A549 (cell line): ENCODE measurements at regions of chr21 and their contacts with region 1.

Region 1: GRCh38 chr21:34888569-34889319 is 160.4 kb downstream of the RUNX1 start:
- DNase-seq: peak; percentile 83 to 89
- ATAC-seq: peak; percentile 72 to 79
- H3K4me3 ChIP-seq: peak overlapping the region; percentile 72
- H3K27ac ChIP-seq: peak overlapping the region; percentile 98 to 100
- H3K4me1 ChIP-seq: peaks cover 16% of the 10 kb centered on the region
- CTCF ChIP-seq: no peak
- EP300 ChIP-seq: no peak
- POLR2A ChIP-seq: peak; percentile 89
- RAD21 ChIP-seq: no peak

Region 2: DNA sequence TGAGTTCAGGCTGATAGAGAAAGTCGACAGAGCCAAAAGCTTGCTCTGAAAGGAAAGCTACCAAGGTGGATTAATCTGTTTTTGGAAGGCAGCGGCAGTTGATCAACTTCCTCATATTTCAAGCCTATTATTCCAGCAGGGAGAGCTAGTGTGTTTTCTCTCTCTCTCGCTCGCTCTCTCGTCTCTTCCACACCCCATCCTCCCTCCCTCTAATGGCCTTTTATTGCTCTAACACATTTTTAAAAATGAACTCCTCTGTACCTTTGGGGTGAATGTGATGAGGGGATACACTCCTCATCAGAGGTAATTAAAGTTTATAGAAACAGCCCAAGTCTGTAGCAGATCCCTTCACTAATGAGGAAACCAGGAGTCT is 93.6 kb before region 1 on chr21:
- CTCF ChIA-PET with region 1: interaction called, 7 read pairs
- POLR2A ChIA-PET with region 1: interaction called, 14 read pairs
- DNase-seq: peak; percentile 26 to 61
- ATAC-seq: peak; percentile 74 to 80
- H3K4me3 ChIP-seq: no peak overlapping the region
- H3K27ac ChIP-seq: peak overlapping the region; percentile 77 to 85
- H3K4me1 ChIP-seq: peaks cover 74% of the 10 kb centered on the region
- CTCF ChIP-seq: peak; percentile 26; the same call in 2 of the 3 replicates
- EP300 ChIP-seq: no peak
- POLR2A ChIP-seq: no peak
- RAD21 ChIP-seq: peak; percentile 46 to 52

Region 3: DNA sequence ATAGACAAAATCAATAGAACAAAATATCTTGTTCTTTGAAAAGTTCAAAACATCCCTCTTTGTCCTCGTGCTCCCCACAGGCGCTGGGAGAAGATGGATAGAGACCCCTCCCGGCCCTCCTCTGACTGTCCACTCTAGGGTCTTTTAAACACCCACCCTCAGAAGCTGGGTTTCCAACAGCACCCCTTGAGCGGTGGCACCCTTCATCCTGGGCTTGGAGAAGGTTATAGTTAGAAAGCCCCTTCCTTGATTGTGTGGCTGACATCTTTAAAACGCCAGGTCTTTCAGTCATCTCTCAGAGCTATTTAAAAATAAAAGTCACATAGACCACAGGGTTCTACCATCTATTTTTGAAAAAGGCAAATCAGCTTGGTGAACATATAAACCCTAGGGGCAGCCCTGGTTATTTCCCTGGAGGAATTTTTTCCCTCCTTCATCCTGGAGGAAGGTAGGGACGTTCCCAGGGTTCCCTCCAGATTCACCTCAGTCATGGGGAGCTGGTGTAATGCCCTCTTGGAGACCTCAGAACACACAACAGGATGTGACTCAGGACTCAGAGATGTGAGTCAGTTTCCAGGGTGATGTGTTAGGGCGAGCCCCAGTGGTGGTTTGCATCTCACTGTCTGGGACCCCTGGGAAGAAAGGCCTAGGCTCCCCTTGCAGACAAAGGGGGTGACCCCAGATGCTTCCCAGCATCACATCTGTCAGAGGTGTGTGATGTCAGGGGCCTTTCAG is 81.4 kb before region 1 on chr21:
- CTCF ChIA-PET with region 1: interaction called, 4 read pairs
- POLR2A ChIA-PET with region 1: interaction called, 14 read pairs
- DNase-seq: peak; percentile 78 to 90
- ATAC-seq: peak; percentile 92 to 94
- H3K4me3 ChIP-seq: no peak overlapping the region
- H3K27ac ChIP-seq: peak overlapping the region; percentile 95 to 97
- H3K4me1 ChIP-seq: peaks cover 54% of the 10 kb centered on the region
- CTCF ChIP-seq: no peak
- EP300 ChIP-seq: peak in 1 of 2 experiments; percentile 57; a peak in 2 of 5 replicates
- POLR2A ChIP-seq: no peak
- RAD21 ChIP-seq: 0 out of 5 replicates have a peak, but pooled peaks of 1 of the 2 experiments have one; percentile 12

Region 4: GRCh38 chr21:34836103-34836932 is 52.4 kb before region 1 on chr21:
- CTCF ChIA-PET with region 1: interaction called, 3 read pairs
- POLR2A ChIA-PET with region 1: interaction called, 24 read pairs
- DNase-seq: peak; percentile 60 to 94
- ATAC-seq: peak; percentile 95 to 97
- H3K4me3 ChIP-seq: peak overlapping the region; percentile 44
- H3K27ac ChIP-seq: peak overlapping the region; percentile 90 to 92
- H3K4me1 ChIP-seq: peaks cover 35% of the 10 kb centered on the region
- CTCF ChIP-seq: no peak
- EP300 ChIP-seq: peak; percentile 66 to 85; a peak in 2 of 5 replicates
- POLR2A ChIP-seq: no peak
- RAD21 ChIP-seq: peak; percentile 3 to 21; a peak in 1 of 5 replicates

Region 5: GRCh38 chr21:34859976-34860653 is 28.6 kb before region 1 on chr21:
- CTCF ChIA-PET with region 1: no interaction called
- POLR2A ChIA-PET with region 1: no interaction called
- DNase-seq: no peak
- ATAC-seq: no peak
- H3K4me3 ChIP-seq: no peak overlapping the region
- H3K27ac ChIP-seq: no peak overlapping the region
- H3K4me1 ChIP-seq: peaks cover 40% of the 10 kb centered on the region
- CTCF ChIP-seq: no peak
- EP300 ChIP-seq: no peak
- POLR2A ChIP-seq: no peak
- RAD21 ChIP-seq: no peak

Region 6: DNA sequence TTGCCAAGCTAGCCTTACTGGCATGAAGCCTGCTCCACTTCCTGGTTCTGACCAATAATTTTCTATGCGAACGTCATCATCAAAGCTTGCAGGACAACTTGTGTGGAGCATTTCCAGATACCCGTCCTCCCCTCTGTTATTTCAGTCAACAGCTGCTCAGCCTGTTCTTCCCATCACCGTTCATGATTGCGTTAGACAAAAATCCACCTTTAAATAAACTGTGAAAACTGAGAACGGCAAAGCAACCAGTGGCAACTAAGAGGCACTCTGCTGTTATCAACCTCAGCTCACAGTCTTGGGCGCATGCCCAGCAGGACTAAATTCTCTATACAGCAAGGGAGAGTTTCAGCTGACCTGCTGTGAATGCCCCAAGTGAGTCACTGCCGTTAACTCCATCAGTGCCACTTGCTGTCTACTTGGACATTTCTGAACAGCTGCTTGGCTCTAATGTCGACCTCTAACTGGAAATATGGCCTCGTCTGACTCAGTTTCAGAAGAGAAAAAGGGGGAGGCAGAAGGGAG is 367.8 kb after region 1 on chr21:
- CTCF ChIA-PET with region 1: interaction called, 4 read pairs
- POLR2A ChIA-PET with region 1: interaction called, 10 read pairs
- DNase-seq: peak; percentile 58 to 86
- ATAC-seq: peak; percentile 99 to 100
- H3K4me3 ChIP-seq: peak overlapping the region; percentile 29
- H3K27ac ChIP-seq: peak overlapping the region; percentile 74 to 84
- H3K4me1 ChIP-seq: peaks cover 21% of the 10 kb centered on the region
- CTCF ChIP-seq: no peak
- EP300 ChIP-seq: peak in 1 of 2 experiments; percentile 38; a peak in 1 of 5 replicates
- POLR2A ChIP-seq: no peak
- RAD21 ChIP-seq: peak; percentile 12 to 31; a peak in 2 of 5 replicates

Region 7: GRCh38 chr21:35840197-35840799 is 951.6 kb after region 1 on chr21:
- CTCF ChIA-PET with region 1: interaction called, 17 read pairs
- POLR2A ChIA-PET with region 1: interaction called, 12 read pairs
- DNase-seq: peak; percentile 5 to 72
- ATAC-seq: peak in 1 of 2 experiments; percentile 62; a peak in 3 of 6 replicates
- H3K4me3 ChIP-seq: no peak overlapping the region
- H3K27ac ChIP-seq: no peak overlapping the region
- H3K4me1 ChIP-seq: no peaks in the 10 kb centered on the region
- CTCF ChIP-seq: peak; percentile 77
- EP300 ChIP-seq: no peak
- POLR2A ChIP-seq: no peak
- RAD21 ChIP-seq: peak; percentile 72 to 81